ENCODE measurements at regions of chr6 and their contacts with region 1.

Region 1: GRCh38 chr6:18595774-18596530 is 208.8 kb downstream of the RNF144B start:
- DNase-seq: peak in 9 of 10 donors; percentile 18 to 86 (median 66)

Region 2: DNA sequence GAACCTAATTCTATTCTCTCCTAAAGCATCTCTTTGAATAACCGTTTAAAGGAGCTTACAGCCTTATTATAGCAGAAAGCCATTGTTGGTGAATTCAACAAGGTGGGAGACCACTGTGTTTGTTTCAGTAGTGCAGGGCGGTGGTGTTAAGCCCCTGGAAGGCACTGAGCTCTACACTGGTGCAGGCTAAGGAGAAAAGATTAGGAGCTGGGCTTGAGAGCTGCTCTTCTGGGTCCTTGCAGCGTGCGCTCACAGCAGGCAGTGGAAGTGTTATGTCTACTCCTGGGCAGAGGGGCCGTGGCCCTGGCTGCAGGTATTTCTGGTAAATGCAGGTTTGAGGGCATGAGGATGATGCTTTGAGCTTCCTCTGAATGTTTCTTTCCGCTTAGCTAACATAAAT is 152.4 kb after region 1 on chr6:
- intact Hi-C with region 1: loop called (anchors 5 kb)
- DNase-seq: peak in 1 of 10 donors; percentile 49

Region 3: DNA sequence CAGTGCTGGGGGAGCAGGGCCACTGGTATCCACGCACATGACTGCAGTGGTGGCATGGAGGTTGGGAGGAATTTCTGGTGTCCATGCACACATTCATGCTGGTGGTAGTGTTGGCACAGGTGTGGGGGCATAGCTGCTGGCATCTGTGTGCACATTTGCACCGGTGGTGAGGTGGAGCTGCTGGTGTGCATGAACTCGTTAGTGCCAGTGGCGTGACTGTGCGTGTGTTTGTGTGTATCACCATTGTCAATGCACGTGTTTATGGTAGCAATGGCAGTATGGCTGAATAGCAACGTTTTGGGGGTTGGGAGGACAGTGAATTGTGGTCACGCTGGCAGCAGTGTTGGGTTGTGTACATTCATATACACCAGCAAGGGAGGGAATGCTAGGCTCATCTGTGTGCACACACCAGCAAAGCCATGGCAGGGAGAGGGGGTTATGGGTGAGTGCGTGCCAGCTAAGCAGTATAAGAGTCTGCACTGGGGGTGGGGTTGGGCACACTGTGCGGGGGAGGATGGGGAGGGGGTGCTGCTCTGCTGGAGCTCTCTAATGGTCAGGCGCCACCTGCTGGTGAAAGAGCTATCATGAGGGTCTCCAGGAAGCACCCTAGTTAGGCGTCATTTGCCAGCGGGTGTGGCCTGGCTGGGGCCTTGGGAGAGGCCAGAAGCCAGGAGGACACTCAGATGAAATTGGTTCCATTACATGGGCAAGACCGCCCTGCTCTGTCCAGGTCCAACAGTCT is 615.1 kb after region 1 on chr6:
- intact Hi-C with region 1: loop called (anchors 2 kb)
- DNase-seq: peak in 5 of 10 donors; percentile 8 to 75 (median 53)

Region 4: DNA sequence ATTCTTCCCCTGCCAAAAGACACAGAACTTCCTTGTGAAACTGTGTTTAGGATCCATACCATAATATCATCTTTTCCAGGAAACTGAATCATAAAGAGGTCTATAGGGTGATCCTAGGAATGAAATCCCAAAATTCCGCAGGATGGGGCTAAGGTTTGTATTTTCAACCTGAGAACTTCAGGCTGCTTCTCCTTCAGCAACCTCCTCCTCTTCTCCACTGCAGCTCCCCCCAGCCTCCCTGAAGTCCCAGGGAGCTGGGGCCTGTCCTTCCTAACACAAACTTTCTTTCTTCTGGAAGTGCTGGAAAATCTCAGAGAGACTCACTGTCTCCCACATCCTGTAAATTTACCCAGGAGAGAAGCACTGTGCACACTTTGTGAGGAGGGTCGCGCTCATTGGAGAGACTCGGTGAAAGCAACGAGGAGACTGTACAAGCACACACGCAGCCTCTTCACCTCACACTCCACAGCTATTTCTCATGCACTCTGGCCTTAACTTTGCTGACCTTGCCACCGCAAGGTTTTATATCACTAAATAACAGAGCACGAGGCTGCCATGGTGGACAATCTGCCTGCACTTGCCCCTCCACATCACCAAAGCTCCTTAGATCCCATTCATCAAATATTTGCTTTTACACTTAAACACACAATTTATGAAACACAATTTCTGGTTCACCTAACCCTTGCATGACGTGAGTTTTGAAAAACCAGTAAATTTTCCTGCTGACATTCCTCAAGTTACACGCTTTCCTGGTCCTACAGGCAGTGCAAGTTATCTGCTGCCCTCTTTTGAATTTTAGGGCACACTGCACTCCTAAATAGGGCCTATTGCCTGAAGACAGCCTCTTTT is 1255.5 kb after region 1 on chr6:
- intact Hi-C with region 1: loop called (anchors 5 kb)
- DNase-seq: peak in 4 of 10 donors; percentile 11 to 51 (median 22)

Region 5: DNA sequence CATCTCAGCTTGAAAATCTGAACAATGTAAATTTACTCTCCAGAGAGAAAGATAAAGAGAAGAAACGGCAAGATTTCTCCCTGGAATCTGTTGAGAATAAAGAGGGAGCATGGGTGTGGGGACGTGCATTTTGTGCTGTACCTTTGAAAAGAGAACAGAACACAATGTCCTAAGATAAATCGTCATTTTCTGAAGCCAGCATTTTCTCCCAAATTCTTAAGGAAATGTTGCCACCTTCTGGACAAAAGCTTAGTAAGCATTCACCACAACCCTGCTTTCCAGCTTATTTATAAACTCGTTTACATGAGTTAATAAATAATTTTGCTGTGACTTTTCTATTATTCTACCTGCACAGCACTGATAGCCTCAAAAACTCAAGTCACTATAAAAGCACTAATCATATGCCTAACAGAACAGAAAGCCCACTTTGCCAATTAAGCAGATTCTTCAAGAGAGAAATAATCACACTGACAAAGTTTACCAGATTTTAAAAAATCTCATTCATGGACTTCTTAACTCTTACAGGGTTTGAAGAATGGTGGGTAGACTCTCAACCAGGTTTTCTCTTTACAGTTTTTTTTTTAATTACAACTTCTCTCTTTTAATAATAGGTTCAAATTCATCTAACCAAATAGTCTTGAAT is 1460.5 kb after region 1 on chr6:
- intact Hi-C with region 1: loop called (anchors 2 kb)
- DNase-seq: no peak

Measured in posterior cingulate gyrus (tissue), 11 donors.